ENCODE measurements at regions of chr1 and their contacts with region 1.

Region 1: DNA sequence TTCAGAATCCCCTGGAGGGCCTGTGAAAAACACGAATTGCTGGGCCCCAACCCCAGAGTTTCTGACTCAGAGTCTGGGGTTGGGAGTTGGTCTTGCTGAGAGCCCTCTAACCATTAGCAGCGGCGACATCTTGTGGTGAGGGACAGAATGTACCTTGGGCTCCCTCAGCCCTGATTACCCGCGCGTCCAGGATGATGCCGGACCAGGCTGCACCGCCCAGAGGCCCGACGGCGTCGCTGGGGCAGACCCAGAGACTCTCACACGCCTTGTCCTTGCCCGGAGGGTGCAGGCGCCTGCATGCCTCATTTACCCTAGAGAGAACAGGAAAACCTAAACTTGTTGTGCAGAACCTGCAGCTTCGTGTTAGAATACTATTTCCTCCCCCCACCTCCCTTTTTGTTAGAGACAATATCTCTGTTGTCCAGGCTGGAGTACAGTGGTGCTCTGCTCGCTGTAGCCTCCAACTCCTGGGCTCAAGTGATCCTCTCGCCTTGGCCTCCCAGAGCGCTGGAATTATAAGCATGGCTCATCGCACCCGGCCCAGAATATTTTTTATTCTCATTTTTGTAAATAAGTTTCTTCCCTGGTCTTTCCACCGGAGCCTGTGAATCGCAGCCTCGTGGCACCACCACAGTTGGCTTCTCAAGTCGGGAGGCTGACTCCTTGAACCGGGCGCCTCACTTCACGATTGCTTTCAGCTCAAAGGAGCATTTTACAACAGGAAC is 22.2 kb upstream of the RD3 start:
- DNase-seq: peak; percentile 99
- H3K4me3 Mint-ChIP-seq: no peak overlapping the region
- H3K27ac Mint-ChIP-seq: peak overlapping the region; percentile 7
- H3K4me1 Mint-ChIP-seq: peaks cover 41% of the 10 kb centered on the region
- H3K27me3 Mint-ChIP-seq: no peaks in the 10 kb centered on the region
- CTCF ChIP-seq: peak; percentile 96

Region 2: DNA sequence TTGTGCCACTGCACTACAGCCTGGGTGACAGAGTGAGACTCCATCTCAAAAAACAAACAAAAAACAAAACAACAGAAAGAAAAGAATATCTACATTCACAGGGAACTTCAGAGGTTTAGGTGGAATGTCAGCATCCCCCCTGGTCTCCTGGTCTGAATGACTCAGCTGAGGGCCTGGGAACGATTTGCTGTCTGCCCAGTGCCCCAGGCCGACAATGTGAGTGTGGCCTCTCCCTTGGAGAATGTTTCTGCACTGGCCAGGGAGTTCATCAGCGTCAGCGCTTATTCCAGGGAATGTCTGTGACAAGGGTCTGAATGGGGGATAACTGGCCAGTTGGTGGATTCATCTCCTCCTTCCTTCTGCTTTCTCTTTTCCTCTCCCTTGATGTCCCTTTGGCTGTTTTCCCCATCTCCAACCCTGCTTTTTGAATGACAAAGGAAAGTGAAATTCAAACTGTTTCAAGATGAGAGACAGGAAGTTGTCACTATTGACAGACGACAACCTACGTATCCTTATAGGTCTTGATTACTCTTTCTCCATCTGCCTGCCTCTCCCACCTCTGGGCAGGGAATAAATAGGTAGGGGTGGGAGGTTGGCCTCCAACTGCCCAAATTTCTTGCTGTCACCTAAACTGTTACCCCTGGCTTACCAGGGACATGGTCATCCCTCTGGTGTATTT is 972.4 kb before region 1 on chr1:
- CTCF ChIA-PET with region 1: no interaction called
- POLR2A ChIA-PET with region 1: no interaction called
- intact Hi-C with region 1: no loop called
- DNase-seq: no peak
- H3K4me3 Mint-ChIP-seq: no peak overlapping the region
- H3K27ac Mint-ChIP-seq: no peak overlapping the region
- H3K4me1 Mint-ChIP-seq: no peaks in the 10 kb centered on the region
- H3K27me3 Mint-ChIP-seq: peaks cover 8% of the 10 kb centered on the region
- CTCF ChIP-seq: no peak

Region 3: DNA sequence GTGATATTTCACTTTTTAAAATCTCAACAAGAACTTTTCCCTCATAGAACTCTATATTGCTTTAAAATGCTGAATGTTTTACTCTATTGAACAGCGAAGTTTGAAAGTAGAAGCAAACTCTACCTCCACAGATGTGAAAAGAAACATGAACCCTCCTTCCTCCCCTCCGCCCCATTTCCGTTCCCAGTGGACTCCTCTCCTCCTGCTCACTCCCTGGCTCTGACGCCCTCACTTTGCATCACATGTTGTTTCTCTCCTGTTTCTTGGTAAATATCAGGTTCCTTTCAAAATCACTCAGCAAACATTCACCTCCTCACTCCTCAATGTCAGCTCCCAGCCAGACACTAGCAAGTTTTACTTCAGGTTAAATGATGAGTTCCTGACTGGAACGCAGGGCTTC is 414.8 kb before region 1 on chr1:
- CTCF ChIA-PET with region 1: no interaction called
- POLR2A ChIA-PET with region 1: no interaction called
- intact Hi-C with region 1: no loop called
- DNase-seq: no peak
- H3K4me3 Mint-ChIP-seq: no peak overlapping the region
- H3K27ac Mint-ChIP-seq: no peak overlapping the region
- H3K4me1 Mint-ChIP-seq: no peaks in the 10 kb centered on the region
- H3K27me3 Mint-ChIP-seq: no peaks in the 10 kb centered on the region
- CTCF ChIP-seq: no peak

Region 4: DNA sequence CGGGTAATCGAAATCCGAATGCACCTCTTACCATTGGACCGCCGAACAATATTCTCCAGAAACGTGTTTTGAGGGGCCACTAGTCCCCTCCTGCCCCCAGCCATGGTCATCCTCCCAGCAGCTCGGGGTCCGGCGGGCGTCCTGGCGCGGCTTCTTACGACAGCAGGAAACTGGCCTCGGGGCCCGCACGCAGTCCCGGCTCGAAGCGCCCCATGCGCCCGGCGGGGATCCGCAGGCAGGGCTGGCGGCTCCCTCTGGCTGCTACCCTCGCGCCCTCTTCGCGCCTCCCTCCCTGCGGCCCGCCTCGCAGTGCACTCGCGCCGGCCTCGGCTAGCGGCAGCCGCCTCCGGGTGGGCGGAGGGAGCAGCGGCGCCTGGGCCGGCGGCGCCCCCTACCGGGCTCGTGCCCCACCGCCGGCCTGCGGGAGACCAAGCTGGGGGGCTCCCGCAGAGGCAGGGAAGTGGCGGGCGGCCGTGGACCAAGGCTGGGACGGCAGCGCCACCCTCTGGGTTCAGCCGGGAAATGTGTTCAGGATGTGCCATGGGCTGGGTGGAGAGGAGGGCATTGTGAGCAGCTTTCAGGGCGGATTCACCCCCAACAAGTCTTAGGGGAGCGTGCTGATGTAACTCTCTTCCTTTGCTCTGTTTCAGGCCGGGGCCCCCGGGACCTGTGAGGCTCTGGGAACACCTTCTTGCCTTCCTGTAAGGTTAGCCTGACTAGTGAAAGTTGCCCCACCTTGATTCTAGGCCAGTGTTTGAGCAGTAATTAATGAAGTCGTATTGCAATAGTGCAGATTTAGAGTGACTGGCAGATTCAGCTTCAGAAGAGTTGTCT is 380.1 kb before region 1 on chr1 and contains the start of gene KCNH1:
- CTCF ChIA-PET with region 1: interaction called, 7 read pairs
- POLR2A ChIA-PET with region 1: interaction called, 3 read pairs
- intact Hi-C with region 1: loop called (anchors 1 kb)
- DNase-seq: peak; percentile 81
- H3K4me3 Mint-ChIP-seq: peak within 1 kb of the TSS; percentile 43
- H3K27ac Mint-ChIP-seq: no peak within 1 kb of the TSS
- H3K4me1 Mint-ChIP-seq: no peaks in the 10 kb centered on the region
- H3K27me3 Mint-ChIP-seq: peaks cover 55% of the 10 kb centered on the region
- CTCF ChIP-seq: peak; percentile 100
- total RNA-seq, gene KCNH1: 0.17 and 0.19 TPM in 2 replicates

Region 5: GRCh38 chr1:211335522-211336157 is 178.6 kb before region 1 on chr1:
- CTCF ChIA-PET with region 1: interaction called, 308 read pairs
- POLR2A ChIA-PET with region 1: no interaction called
- intact Hi-C with region 1: no loop called
- DNase-seq: no peak
- H3K4me3 Mint-ChIP-seq: no peak overlapping the region
- H3K27ac Mint-ChIP-seq: no peak overlapping the region
- H3K4me1 Mint-ChIP-seq: peaks cover 22% of the 10 kb centered on the region
- H3K27me3 Mint-ChIP-seq: no peaks in the 10 kb centered on the region
- CTCF ChIP-seq: no peak

Region 6: DNA sequence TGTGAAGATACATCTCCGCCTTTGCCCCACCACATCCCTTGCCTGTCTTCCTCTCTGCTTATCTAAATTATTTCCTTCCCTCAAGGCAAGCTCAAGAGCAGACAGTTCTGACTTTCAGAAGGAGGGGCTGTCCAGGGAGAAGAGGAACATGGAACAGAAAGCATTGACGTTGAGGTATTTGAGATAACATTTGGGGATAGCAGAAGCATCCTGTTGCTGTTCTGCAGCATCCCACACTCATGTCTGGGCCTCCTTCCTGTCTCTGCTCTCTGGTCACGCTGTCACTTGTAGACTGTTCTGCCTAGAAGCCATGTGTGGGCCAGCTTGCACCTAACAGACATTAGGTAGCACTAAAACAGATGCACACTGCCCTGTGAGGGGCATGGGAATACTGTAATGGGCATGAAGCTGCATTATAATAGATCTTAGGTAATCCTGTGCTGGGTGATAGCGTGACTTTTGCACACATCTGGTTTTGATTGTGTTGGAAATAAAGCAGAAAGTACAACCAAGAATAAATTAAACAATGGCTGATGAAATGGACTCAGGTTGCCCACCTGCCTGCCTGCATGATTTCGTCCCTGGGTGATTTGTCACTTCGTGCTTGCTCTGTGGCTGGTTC is 21.6 kb before region 1 on chr1:
- CTCF ChIA-PET with region 1: interaction called, 682 read pairs
- POLR2A ChIA-PET with region 1: interaction called, 3 read pairs
- intact Hi-C with region 1: no loop called
- DNase-seq: no peak
- H3K4me3 Mint-ChIP-seq: no peak overlapping the region
- H3K27ac Mint-ChIP-seq: no peak overlapping the region
- H3K4me1 Mint-ChIP-seq: no peaks in the 10 kb centered on the region
- H3K27me3 Mint-ChIP-seq: no peaks in the 10 kb centered on the region
- CTCF ChIP-seq: no peak

Region 7: GRCh38 chr1:211557894-211558625 is 43.9 kb after region 1 on chr1:
- CTCF ChIA-PET with region 1: interaction called, 58 read pairs
- POLR2A ChIA-PET with region 1: no interaction called
- intact Hi-C with region 1: no loop called
- DNase-seq: no peak
- H3K4me3 Mint-ChIP-seq: no peak overlapping the region
- H3K27ac Mint-ChIP-seq: no peak overlapping the region
- H3K4me1 Mint-ChIP-seq: peaks cover 7% of the 10 kb centered on the region
- H3K27me3 Mint-ChIP-seq: no peaks in the 10 kb centered on the region
- CTCF ChIP-seq: no peak

Region 8: DNA sequence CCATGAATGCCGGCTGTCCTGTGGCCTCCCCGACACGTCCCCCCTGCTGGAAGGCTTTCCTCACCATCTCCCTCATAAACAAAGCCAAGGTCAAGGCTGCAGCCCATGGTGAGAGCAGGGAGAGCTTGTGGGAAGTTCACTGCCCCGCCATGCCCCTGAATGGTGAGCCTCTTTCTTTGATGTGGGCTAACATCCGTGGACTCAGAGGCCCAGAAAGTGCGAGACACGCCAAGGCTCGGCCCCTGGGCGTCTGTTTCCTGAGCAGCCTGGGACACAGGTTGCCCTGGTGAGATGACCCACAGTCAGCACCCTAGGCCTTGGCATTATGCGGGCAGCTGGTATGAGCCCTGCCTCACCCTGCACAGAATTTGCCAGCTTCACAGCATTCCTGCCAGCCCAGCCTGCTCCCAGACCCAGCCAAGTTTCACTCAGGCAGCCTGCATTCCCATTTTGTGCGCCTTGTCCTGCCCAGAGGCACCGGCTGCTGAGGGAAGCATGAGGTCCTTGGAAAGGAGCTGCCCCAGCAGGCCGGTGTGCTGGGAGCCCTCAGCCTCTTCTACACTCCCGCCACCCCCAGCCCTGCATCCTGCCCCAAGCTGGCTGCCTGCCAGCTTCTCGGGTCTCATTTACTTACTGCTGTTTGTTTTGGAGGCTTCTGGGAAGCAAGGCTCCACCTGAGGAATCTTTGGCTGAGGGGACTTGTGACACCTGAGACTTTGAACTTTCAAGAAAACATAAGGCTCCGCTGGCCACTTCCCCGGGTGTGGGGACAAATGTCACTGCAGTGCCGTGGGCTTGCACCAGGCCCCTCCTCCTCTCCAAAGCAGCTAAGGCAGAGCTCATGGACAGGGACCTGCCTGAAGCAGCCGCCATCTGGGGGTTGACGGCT is 129.4 kb after region 1 on chr1:
- CTCF ChIA-PET with region 1: interaction called, 418 read pairs
- POLR2A ChIA-PET with region 1: interaction called, 12 read pairs
- intact Hi-C with region 1: no loop called
- DNase-seq: peak; percentile 97
- H3K4me3 Mint-ChIP-seq: peak overlapping the region; percentile 45
- H3K27ac Mint-ChIP-seq: peak overlapping the region; percentile 88
- H3K4me1 Mint-ChIP-seq: peaks cover 56% of the 10 kb centered on the region
- H3K27me3 Mint-ChIP-seq: no peaks in the 10 kb centered on the region
- CTCF ChIP-seq: no peak

Region 9: GRCh38 chr1:211882381-211883004 is 368.3 kb after region 1 on chr1:
- CTCF ChIA-PET with region 1: no interaction called
- POLR2A ChIA-PET with region 1: no interaction called
- intact Hi-C with region 1: no loop called
- DNase-seq: no peak
- H3K4me3 Mint-ChIP-seq: no peak overlapping the region
- H3K27ac Mint-ChIP-seq: no peak overlapping the region
- H3K4me1 Mint-ChIP-seq: peaks cover 7% of the 10 kb centered on the region
- H3K27me3 Mint-ChIP-seq: no peaks in the 10 kb centered on the region
- CTCF ChIP-seq: no peak

Measured in MCF 10A (cell line).